ENCODE measurements at regions of chr7 and their contacts with region 1.

Region 1: DNA sequence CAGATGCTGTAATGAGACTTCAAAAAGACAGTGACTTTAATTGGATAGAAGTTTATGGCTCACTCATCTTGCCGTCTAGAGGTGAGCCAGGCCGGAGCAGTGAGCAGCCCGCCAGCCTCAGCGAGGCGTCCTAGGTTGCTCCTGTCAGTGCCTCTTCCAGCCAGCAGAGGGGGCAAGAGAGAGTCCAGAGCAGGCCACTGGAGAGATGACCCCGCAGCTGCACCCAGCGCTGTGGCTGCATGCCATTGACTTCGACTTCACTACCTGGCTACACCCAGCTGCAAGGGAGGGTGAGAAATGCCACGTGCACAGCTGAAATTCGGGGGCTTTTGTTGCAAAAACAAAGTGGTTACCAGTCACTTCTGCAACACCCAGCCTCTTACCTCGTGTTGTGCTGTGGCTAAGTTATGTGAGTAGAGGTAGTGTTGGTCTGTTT is 26.5 kb downstream of the NUB1 start:
- DNase-seq: peak; percentile 81 to 91
- ATAC-seq: peak; percentile 96 to 99 (median 98)
- H3K4me3 ChIP-seq: no peak overlapping the region
- H3K27ac ChIP-seq: no peak overlapping the region
- H3K4me1 ChIP-seq: peaks cover 4% of the 10 kb centered on the region
- H3K27me3 ChIP-seq: no peaks in the 10 kb centered on the region
- CTCF ChIP-seq: peak; percentile 95

Region 2: DNA sequence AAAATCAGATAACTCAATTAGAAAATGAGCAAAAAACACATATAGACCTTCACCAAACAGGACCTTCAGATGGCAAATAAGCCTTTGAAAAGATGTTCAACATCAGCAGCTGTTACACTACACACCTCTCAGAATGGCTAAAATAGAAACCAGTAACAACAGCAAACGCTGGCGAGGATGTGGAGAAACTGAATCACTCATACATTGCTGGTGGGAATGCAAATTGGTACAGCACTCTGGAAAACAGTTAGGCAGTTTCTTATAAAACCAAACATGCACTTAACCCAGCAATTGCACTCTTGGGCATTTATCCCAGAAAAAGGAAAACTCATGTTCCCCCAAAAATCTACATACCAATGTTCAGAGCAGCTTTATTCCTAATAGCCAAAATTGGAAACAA is 82.0 kb before region 1 on chr7:
- intact Hi-C with region 1: no loop called
- DNase-seq: no peak
- ATAC-seq: no peak
- H3K4me3 ChIP-seq: no peak overlapping the region
- H3K27ac ChIP-seq: no peak overlapping the region
- H3K4me1 ChIP-seq: no peaks in the 10 kb centered on the region
- H3K27me3 ChIP-seq: no peaks in the 10 kb centered on the region
- CTCF ChIP-seq: no peak

Region 3: GRCh38 chr7:151448261-151449252 is 80.4 kb after region 1 on chr7:
- intact Hi-C with region 1: loop called (anchors 1 to 2 kb)
- DNase-seq: peak; percentile 74 to 80
- ATAC-seq: peak; percentile 68 to 93 (median 83)
- H3K4me3 ChIP-seq: peak overlapping the region; percentile 70
- H3K27ac ChIP-seq: no peak overlapping the region
- H3K4me1 ChIP-seq: no peaks in the 10 kb centered on the region
- H3K27me3 ChIP-seq: no peaks in the 10 kb centered on the region
- CTCF ChIP-seq: peak; percentile 73

Region 4: DNA sequence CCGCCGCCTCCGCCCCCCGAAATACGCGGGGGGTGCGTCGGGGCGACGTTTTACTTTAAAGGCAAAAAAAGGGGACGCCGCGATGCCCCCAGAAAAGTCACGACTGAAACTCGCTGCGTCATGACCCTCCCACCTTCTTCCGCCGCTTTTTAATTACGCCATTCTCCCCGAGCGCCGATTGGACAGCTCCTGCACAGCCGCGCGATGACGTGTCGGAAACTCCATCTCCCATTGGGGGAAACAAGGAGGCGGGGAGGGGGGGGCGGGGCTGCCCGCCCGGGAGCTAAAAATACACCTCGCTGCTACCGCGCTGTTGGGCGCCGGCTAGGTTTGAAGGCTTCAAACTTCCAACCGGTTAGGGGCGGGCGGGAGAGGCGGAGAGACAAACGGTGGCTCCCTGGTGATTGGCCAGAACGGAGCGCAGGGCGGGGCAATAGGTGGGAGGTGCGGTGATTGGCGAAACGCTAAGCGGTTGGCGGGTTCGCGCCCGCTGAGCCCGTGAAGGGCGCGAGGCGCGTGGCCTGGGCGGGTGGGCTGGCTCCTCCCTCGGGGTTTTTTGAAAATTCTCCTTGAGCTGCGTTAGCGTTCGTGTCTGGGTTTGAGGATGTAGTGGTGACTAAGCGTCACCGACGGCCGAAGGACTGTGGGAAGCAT is 151.7 kb after region 1 on chr7 and contains the start of gene RHEB:
- intact Hi-C with region 1: loop called in 1 of 2 experiments (anchors 10 kb)
- DNase-seq: peak; percentile 99
- ATAC-seq: peak; percentile 90 to 93 (median 91)
- H3K4me3 ChIP-seq: peak within 1 kb of the TSS; percentile 85
- H3K27ac ChIP-seq: peak within 1 kb of the TSS; percentile 99
- H3K4me1 ChIP-seq: peaks cover 20% of the 10 kb centered on the region
- H3K27me3 ChIP-seq: no peaks in the 10 kb centered on the region
- CTCF ChIP-seq: no peak
- total RNA-seq, gene RHEB: 98.0 to 191 (median 142) TPM

Region 5: DNA sequence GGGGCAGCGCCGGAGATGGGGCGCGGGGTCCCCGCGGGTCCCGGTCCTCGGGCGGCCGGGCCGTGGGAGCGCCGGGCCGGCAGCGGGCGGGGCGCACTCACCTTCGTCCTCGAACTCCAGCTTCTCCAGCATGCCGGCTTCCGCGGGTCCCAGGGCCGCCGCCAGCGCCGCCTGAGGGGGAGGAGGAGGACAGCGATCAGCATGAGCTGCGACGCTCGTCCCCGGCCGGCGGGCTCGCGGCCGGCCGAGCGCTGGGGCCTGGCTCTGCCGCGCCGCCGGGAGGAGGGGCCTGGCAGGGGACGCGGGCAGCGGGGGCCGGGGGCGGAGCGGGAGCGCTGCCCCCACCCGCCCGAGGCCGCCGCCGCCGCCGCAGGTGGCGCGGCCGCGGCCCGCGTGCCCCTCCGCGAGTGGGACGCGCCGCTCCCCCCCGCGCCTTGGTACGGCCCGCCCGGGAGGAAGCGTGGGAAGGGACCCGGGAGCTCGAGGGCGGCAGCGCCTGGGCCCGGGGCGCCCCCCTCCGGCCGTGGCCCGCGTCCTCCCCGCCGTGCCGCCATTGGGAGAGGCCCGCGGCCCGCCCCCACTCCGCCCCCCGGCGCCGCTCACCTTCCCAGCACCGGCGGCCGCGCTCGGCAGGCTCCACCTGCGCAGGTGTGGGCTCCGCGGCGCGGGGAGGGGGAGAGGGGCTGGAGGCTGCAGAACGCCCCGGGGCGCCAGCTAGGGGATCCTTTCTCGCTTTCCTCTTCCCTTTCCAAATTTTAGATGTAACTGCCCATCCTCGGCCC is 264.0 kb after region 1 on chr7:
- intact Hi-C with region 1: loop called in 1 of 2 experiments (anchors 5 kb)
- DNase-seq: peak; percentile 86 to 88
- ATAC-seq: peak; percentile 80 to 86 (median 84)
- H3K4me3 ChIP-seq: peak overlapping the region; percentile 80
- H3K27ac ChIP-seq: peak overlapping the region; percentile 78
- H3K4me1 ChIP-seq: peaks cover 9% of the 10 kb centered on the region
- H3K27me3 ChIP-seq: no peaks in the 10 kb centered on the region
- CTCF ChIP-seq: no peak

Measured in psoas muscle (tissue), 8 donors.